Dendritic cell treated with granulocyte-macrophage colony-stimulating factor and Interleukin-4, amounts not matched to agents 40 ng/mL and 50 ng/mL, for 4 days (primary cell): ENCODE measurements at regions of chr19 and their contacts with region 1.

Region 1: DNA sequence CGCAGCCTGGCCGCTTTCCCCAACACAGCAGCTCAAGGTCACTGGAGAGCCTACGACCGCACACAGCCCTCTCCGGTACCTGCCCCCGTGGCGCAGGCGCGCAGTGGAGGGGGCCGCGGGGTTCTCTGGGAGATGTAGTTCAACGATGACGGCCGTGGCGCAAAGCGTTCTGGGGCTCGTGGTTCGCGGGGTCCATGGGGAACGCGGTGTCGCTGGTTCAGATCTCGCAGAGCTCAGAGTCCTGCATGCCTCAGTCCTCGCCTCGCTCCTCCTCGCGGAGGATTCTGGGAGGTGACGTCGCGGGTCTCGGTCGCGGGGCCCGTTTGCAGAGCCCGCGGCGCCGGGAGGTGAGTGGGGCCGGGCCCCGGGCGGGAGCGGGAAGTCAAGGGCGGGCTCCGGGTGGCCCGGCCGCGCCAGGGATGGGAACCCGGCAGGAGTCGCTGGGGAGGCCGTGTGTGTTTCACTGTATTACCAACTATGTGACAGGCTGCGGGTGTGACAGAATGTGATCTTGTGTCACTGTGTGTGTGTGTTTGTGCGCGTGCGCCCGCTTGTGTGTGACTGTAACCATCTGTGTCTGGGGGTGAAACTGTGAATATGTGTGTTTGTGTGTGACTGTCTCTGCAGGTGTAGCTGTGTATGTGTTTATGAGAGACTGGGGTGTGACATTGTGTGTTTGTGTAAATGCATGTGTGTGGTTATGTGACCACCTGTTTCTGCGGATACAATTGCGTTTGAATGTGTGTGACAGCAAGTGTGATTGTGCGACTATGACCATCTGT is at the start of gene ZNF527:
- H3K4me3 Mint-ChIP-seq: peak within 1 kb of the TSS; percentile 98
- H3K27ac Mint-ChIP-seq: peak within 1 kb of the TSS; percentile 98
- H3K4me1 Mint-ChIP-seq: peaks cover 9% of the 10 kb centered on the region
- H3K27me3 Mint-ChIP-seq: no peaks in the 10 kb centered on the region

Region 2: GRCh38 chr19:36837906-36838783 is 532.9 kb before region 1 on chr19 and contains the start of gene ZNF790:
- intact Hi-C with region 1: loop called (anchors 2 kb)
- H3K4me3 Mint-ChIP-seq: no peak within 1 kb of the TSS
- H3K27ac Mint-ChIP-seq: no peak within 1 kb of the TSS
- H3K4me1 Mint-ChIP-seq: no peaks in the 10 kb centered on the region
- H3K27me3 Mint-ChIP-seq: no peaks in the 10 kb centered on the region

Region 3: GRCh38 chr19:37313335-37313627 is 57.8 kb before region 1 on chr19:
- intact Hi-C with region 1: loop called (anchors 2 kb)
- H3K4me3 Mint-ChIP-seq: peak overlapping the region; percentile 67
- H3K27ac Mint-ChIP-seq: peak overlapping the region; percentile 10
- H3K4me1 Mint-ChIP-seq: peaks cover 15% of the 10 kb centered on the region
- H3K27me3 Mint-ChIP-seq: peaks cover 26% of the 10 kb centered on the region

Region 4: DNA sequence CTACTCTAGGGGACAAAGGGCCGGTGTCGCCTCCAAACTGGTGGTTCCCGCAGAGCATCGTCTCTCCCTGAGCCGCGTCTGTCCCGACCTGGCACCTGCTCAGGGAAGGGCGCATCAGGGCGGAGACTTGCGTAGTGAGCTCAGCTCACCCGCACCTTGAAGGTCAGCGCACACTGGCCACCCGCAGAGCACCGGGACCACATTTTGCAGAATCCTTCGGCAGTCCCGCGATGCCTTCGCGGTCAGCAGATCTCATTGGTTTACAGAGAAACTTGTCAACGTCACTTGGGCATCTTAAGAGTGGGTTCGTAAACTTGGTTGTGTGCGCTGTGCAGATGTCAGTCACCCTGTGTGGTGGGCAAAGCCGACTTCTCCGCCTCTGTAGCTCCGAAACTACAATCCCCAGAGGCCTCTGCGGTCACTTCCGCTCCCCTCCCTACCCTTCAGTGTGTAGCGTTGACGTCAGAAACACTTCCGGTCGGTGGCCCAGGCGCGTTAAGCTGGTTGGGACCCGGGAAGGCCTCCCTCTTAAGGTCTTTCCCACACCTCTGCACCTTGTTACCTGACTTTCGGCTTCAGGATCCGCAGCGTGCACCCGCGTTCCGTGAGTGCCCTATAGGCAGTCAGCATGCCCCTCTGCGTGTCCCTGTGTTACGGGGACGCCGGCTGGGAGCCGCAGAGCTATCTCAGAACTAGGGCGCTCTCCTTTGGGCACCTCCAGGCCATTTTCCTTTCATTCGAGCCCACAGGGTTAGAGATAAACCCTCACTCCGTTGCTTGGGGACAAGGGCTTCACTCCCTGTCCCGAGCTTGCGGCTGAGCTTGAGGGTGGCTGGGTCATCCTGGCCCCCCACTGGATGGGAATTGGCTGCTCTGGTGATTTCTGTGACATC is 36.6 kb before region 1 on chr19:
- intact Hi-C with region 1: loop called (anchors 2 kb)
- H3K4me3 Mint-ChIP-seq: peak overlapping the region; percentile 95
- H3K27ac Mint-ChIP-seq: peak overlapping the region; percentile 91
- H3K4me1 Mint-ChIP-seq: peaks cover 14% of the 10 kb centered on the region
- H3K27me3 Mint-ChIP-seq: no peaks in the 10 kb centered on the region

Region 5: GRCh38 chr19:37413243-37414084 is 42.4 kb after region 1 on chr19:
- intact Hi-C with region 1: no loop called
- H3K4me3 Mint-ChIP-seq: no peak overlapping the region
- H3K27ac Mint-ChIP-seq: no peak overlapping the region
- H3K4me1 Mint-ChIP-seq: no peaks in the 10 kb centered on the region
- H3K27me3 Mint-ChIP-seq: no peaks in the 10 kb centered on the region

Region 6: DNA sequence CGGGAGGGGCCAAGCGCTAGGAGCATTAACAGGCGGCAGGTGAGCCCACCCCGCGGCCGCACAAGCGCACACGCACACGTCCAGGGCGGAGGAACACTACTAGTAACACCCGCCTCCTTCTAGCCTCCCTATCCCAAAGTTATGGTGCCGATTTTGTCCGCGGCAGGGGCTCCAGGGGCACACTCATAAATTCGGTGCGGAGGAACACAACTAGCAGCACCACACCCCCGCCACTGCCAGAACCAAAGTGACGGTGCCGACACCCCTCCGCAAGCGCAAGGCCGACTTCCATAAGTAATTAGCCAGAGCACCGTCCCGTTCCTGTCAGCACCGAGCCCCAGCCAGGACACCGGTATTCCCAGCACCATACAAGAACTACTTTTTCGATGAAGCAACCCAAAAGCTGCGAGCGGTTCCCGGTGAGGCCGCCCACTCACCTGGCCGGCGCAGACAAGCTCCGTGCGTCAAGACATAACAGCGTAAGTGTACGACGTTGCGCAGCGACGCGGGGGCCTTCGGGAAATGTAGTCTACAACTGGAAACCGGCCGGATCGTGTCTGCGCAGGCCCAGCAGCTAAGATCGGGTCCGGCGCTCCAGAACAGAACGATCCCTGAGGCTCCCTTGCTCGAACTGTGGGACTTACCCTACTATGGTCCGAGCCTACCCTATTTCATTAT is 223.4 kb after region 1 on chr19 and contains the starts of genes ZNF540 and ZNF571:
- intact Hi-C with region 1: loop called (anchors 5 kb)
- H3K4me3 Mint-ChIP-seq: peak within 1 kb of the TSS; percentile 95
- H3K27ac Mint-ChIP-seq: peak within 1 kb of the TSS; percentile 82
- H3K4me1 Mint-ChIP-seq: peaks cover 19% of the 10 kb centered on the region
- H3K27me3 Mint-ChIP-seq: peaks cover 6% of the 10 kb centered on the region